ENCODE measurements at regions of chr17 and their contacts with region 1.

Region 1: DNA sequence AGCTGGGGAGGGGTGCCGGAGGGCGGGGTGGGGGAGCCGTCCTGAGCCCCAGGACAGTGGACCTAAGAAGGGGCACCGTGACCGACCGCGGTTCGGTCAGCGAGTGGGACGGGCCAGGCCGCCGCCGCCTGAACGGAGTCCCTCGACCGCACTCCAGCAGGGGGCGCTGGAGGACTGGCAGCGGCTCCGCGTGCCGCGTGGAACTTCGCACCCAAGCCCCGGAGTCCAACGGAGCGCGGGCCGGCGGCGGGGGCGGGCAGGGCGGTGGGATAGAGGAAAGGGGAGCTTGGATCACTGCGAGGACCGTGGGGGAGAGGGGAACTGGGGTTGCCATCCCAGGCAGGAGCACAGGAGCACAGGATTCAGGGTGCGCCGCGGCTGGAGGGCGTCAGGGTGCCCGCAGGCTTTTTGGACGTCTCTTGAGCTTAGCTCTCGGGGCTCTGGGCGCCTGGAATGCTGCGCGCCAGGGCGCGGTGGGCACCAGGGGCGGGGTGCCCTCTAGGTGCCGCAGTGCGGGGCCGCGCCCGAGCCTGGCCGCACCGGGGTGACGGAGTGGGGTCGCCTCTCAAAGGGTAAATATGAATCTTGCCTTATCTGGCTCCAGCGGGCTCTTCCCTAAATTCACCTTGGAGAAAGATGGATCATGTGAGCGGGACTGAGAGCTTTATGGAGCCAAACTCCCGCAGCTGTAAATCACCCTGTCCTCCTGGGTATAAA is 382 bp upstream of the OTOP2 start:
- DNase-seq: peak; percentile 79
- ATAC-seq: peak; percentile 18
- H3K4me3 Mint-ChIP-seq: peak overlapping the region; percentile 70
- H3K27ac Mint-ChIP-seq: no peak overlapping the region
- H3K4me1 Mint-ChIP-seq: peaks cover 13% of the 10 kb centered on the region
- H3K27me3 Mint-ChIP-seq: peaks cover 74% of the 10 kb centered on the region
- CTCF ChIP-seq: peak; percentile 91

Region 2: GRCh38 chr17:74873038-74873873 is 50.4 kb before region 1 on chr17:
- CTCF ChIA-PET with region 1: interaction called, 23 read pairs
- POLR2A ChIA-PET with region 1: no interaction called
- DNase-seq: peak; percentile 99
- ATAC-seq: peak; percentile 91
- H3K4me3 Mint-ChIP-seq: peak overlapping the region; percentile 81
- H3K27ac Mint-ChIP-seq: peak overlapping the region; percentile 98
- H3K4me1 Mint-ChIP-seq: peaks cover 22% of the 10 kb centered on the region
- H3K27me3 Mint-ChIP-seq: peaks cover 8% of the 10 kb centered on the region
- CTCF ChIP-seq: no peak

Region 3: DNA sequence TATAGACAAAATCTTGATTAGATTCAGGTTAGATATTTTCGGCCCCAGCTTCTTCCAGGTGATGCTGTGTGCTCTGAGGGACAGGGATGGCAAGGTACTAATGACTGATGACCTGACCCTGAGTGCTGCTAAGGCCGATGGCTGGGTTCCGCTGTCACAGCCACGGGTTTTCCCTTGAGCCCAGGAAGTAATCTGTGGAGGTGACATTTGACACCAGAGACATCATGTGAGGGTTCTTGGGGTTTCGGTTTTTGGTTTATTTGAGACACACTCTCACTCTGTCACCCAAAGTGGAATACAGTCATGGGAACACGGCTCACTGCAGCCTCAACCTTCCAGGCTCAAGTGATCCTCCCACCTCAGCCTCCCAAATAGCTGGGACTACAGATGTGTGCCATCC is 21.9 kb after region 1 on chr17:
- CTCF ChIA-PET with region 1: interaction called, 12 read pairs
- POLR2A ChIA-PET with region 1: no interaction called
- DNase-seq: no peak
- ATAC-seq: no peak
- H3K4me3 Mint-ChIP-seq: no peak overlapping the region
- H3K27ac Mint-ChIP-seq: no peak overlapping the region
- H3K4me1 Mint-ChIP-seq: peaks cover 19% of the 10 kb centered on the region
- H3K27me3 Mint-ChIP-seq: peaks cover 10% of the 10 kb centered on the region
- CTCF ChIP-seq: no peak

Region 4: GRCh38 chr17:74972107-74972972 is 48.6 kb after region 1 on chr17 and contains the start of gene HID1:
- CTCF ChIA-PET with region 1: interaction called, 12 read pairs
- POLR2A ChIA-PET with region 1: no interaction called
- DNase-seq: peak; percentile 89
- ATAC-seq: peak; percentile 83
- H3K4me3 Mint-ChIP-seq: peak within 1 kb of the TSS; percentile 90
- H3K27ac Mint-ChIP-seq: no peak within 1 kb of the TSS
- H3K4me1 Mint-ChIP-seq: peaks cover 12% of the 10 kb centered on the region
- H3K27me3 Mint-ChIP-seq: peaks cover 55% of the 10 kb centered on the region
- CTCF ChIP-seq: no peak
- total RNA-seq, gene HID1: 16.7 to 19.4 TPM (median 19.3 TPM) in 3 replicates